ENCODE measurements at regions of chr15 and their contacts with region 1.

Region 1: DNA sequence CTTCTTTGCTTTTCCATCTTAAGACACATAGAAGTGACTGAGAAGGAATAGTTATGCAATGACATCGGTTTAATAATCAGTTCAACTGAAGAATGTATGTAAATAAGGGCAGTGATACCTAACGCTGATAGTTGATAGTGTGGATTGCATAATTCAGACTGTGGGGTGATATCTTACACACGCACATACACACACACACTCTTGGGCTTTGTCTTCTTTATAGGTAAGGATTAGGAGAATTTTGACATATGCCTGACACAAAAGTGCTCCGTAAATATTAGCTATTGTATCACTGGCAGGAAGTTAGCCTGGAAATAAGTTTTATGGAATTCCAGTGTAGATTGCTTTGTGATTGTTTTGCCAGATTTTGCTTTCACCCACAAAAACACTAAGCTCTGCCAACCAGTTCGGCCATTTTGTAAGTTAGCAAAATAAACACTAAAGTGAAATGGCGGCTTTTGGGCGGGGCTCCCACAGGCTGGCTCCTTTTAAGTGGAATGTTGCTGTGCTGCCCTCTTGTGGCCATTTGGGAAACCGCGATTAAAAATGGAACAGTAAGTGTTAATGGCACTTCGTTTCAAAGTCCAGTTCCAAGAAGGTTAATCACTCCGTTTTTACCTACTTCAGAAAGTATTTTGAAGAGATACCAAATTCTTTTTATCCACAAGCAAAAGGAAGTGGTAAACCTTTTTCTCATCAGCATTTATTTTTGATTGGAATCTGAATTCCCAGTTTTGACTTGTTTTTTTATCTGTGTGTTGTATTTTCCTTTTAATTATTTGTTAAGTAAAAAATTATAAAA is 17.7 kb downstream of the CHD2 start:
- DNase-seq: peak; percentile 96
- H3K4me3 Mint-ChIP-seq: peak overlapping the region; percentile 31
- H3K27ac Mint-ChIP-seq: peak overlapping the region; percentile 87
- H3K4me1 Mint-ChIP-seq: peaks cover 85% of the 10 kb centered on the region
- H3K27me3 Mint-ChIP-seq: no peaks in the 10 kb centered on the region

Region 2: GRCh38 chr15:92625251-92625980 is 292.4 kb before region 1 on chr15:
- CTCF ChIA-PET with region 1: no interaction called
- POLR2A ChIA-PET with region 1: no interaction called
- intact Hi-C with region 1: loop called (anchors 5 kb)
- DNase-seq: peak; percentile 46
- H3K4me3 Mint-ChIP-seq: peak overlapping the region; percentile 3
- H3K27ac Mint-ChIP-seq: peak overlapping the region; percentile 93
- H3K4me1 Mint-ChIP-seq: peaks cover 39% of the 10 kb centered on the region
- H3K27me3 Mint-ChIP-seq: peaks cover 8% of the 10 kb centered on the region

Region 3: DNA sequence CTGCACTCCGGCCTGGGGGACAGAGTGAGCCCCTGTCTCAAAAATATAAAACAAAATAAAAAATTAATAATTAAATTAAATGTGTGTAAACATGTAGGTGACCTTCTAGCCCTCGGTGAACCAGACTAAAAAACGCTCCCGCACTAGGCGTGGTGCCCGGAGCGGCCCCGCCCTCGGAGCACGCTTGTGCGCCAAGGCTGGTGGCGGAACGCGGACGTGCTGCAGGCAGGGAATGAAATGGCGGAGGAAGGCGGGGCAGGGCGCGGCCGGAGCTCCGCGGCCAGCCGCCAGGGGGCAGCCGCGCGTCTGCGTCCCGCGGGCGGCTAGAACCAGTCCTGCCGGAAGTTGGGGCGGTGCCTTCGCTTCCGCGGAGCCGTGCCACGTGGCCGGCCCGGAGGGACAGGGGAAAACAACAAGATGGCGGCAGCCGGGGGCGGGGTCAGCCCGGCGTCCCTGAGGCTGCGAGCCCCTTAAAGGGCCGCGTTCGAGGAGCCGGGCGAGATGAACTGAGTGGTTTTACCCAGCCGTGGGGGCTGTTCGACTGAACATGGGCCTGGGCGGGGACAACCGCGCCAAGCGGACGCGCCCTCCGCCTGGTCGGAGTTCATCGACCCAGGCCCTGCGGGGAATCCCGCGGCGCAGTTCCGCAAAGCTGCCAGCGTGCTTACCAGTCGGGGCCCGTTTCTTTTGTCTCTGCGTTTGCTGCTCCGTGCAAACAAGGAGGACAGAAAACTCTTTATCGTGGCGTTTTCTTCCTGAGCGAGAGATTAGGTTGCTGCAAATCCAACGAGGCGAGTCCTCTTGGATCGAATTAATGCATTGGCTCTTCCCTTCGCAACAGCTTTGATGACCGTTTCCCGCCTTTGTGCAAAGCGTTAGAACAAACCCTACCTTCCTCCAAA is 108.6 kb before region 1 on chr15:
- CTCF ChIA-PET with region 1: interaction called, 40 read pairs
- POLR2A ChIA-PET with region 1: interaction called, 47 read pairs
- intact Hi-C with region 1: loop called (anchors 1 kb)
- DNase-seq: peak; percentile 99
- H3K4me3 Mint-ChIP-seq: peak overlapping the region; percentile 95
- H3K27ac Mint-ChIP-seq: peak overlapping the region; percentile 99
- H3K4me1 Mint-ChIP-seq: peaks cover 43% of the 10 kb centered on the region
- H3K27me3 Mint-ChIP-seq: no peaks in the 10 kb centered on the region

Region 4: DNA sequence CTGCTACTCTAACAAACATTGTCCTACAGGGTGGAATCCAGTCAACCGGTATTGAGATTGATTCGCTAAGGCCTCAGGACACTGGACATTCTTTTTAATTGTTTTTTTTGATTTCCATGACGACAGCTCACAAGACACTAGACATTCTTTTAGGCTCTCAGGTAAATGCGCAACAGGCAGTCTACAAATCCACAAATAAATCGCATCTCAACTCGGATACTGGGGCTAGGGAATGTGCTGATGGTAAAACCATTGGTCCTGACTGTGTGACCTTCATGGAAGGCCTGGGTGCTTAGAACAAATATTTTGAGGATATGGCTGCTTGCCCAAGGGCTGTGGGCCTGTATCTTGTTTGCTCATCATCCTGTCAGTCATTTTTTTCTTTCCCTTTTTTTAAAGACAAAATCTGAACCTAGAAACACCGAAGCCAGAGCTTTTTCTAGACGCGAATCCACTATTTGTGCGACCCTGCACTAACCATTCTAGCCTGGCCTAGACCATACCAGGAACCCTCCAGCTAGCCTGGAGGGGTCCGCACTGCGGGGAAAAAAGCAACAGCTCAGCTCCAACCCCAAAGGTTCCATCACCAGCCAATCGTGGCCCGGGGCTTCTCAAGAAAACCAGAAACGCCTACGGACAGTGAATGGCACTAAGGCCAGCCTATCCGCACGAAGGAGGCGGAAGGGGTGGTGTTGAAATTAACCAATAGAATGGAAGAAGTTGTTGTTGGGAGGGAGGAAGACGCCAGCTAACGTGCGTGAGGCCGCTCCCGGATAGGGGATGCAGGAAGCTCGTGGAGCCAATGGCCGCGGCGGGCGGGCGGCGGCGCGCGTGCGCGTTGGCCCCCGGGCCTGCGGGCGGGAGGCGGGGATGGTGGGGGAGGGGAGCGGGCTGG is 35.8 kb before region 1 on chr15:
- CTCF ChIA-PET with region 1: interaction called, 8 read pairs
- POLR2A ChIA-PET with region 1: interaction called, 72 read pairs
- intact Hi-C with region 1: loop called (anchors 1 kb)
- DNase-seq: peak; percentile 99
- H3K4me3 Mint-ChIP-seq: peak overlapping the region; percentile 96
- H3K27ac Mint-ChIP-seq: peak overlapping the region; percentile 97
- H3K4me1 Mint-ChIP-seq: peaks cover 43% of the 10 kb centered on the region
- H3K27me3 Mint-ChIP-seq: no peaks in the 10 kb centered on the region

Region 5: GRCh38 chr15:92896561-92896960 is 21.2 kb before region 1 on chr15:
- CTCF ChIA-PET with region 1: interaction called, 17 read pairs
- POLR2A ChIA-PET with region 1: interaction called, 57 read pairs
- intact Hi-C with region 1: loop called (anchors 2 kb)
- DNase-seq: no peak
- H3K4me3 Mint-ChIP-seq: peak overlapping the region; percentile 18
- H3K27ac Mint-ChIP-seq: peak overlapping the region; percentile 62
- H3K4me1 Mint-ChIP-seq: peaks cover 69% of the 10 kb centered on the region
- H3K27me3 Mint-ChIP-seq: no peaks in the 10 kb centered on the region

Region 6: GRCh38 chr15:92930776-92931175 is 13.0 kb after region 1 on chr15:
- CTCF ChIA-PET with region 1: interaction called, 15 read pairs
- POLR2A ChIA-PET with region 1: no interaction called
- intact Hi-C with region 1: no loop called
- DNase-seq: no peak
- H3K4me3 Mint-ChIP-seq: no peak overlapping the region
- H3K27ac Mint-ChIP-seq: peak overlapping the region; percentile 51
- H3K4me1 Mint-ChIP-seq: peaks cover 74% of the 10 kb centered on the region
- H3K27me3 Mint-ChIP-seq: no peaks in the 10 kb centered on the region

Region 7: DNA sequence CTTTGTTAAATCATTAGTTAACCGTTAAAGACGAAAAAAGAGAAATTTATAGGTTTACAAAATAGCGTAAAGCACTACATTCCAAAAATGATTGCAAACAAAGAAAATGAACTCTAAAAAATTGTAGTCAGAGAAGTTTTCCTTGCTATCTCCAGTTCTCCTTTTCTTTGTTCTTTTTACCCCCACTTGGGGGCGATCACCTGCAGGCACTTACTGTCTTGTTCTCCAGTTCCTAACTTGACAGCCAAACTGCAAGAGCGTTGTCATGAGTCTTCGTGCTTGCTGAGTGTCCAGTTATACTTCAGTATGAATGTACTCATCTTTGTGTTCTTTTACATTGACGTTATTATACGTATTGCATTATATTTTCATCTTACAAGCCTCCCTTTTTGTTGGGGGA is 36.8 kb after region 1 on chr15:
- CTCF ChIA-PET with region 1: interaction called, 5 read pairs
- POLR2A ChIA-PET with region 1: no interaction called
- intact Hi-C with region 1: loop called (anchors 1 kb)
- DNase-seq: peak; percentile 26
- H3K4me3 Mint-ChIP-seq: no peak overlapping the region
- H3K27ac Mint-ChIP-seq: no peak overlapping the region
- H3K4me1 Mint-ChIP-seq: peaks cover 37% of the 10 kb centered on the region
- H3K27me3 Mint-ChIP-seq: no peaks in the 10 kb centered on the region